CD4-positive, alpha-beta memory T cell (primary cell): ENCODE measurements at regions of chrX and their contacts with region 1.

Region 1: GRCh38 chrX:46912098-46912602 is at the start of gene JADE3:
- DNase-seq: peak in 4 of 5 donors; percentile 8 to 40 (median 13)
- H3K4me3 ChIP-seq: peak within 1 kb of the TSS in 1 of 2 donors; percentile 38
- H3K4me3 Mint-ChIP-seq: peak within 1 kb of the TSS; percentile 71 to 86 (median 82)
- H3K27ac ChIP-seq: no peak within 1 kb of the TSS
- H3K27ac Mint-ChIP-seq: peak within 1 kb of the TSS in 1 of 7 donors; percentile 36
- H3K4me1 ChIP-seq: peaks cover 10% of the 10 kb centered on the region
- H3K4me1 Mint-ChIP-seq: peaks cover 4 to 6% (median 6%) of the 10 kb centered on the region in 4 donors
- H3K27me3 ChIP-seq: peaks cover 8% of the 10 kb centered on the region
- H3K27me3 Mint-ChIP-seq: peaks cover 9 to 10% of the 10 kb centered on the region in 2 donors
- total RNA-seq, gene JADE3: 0.44 to 0.58 TPM

Region 2: DNA sequence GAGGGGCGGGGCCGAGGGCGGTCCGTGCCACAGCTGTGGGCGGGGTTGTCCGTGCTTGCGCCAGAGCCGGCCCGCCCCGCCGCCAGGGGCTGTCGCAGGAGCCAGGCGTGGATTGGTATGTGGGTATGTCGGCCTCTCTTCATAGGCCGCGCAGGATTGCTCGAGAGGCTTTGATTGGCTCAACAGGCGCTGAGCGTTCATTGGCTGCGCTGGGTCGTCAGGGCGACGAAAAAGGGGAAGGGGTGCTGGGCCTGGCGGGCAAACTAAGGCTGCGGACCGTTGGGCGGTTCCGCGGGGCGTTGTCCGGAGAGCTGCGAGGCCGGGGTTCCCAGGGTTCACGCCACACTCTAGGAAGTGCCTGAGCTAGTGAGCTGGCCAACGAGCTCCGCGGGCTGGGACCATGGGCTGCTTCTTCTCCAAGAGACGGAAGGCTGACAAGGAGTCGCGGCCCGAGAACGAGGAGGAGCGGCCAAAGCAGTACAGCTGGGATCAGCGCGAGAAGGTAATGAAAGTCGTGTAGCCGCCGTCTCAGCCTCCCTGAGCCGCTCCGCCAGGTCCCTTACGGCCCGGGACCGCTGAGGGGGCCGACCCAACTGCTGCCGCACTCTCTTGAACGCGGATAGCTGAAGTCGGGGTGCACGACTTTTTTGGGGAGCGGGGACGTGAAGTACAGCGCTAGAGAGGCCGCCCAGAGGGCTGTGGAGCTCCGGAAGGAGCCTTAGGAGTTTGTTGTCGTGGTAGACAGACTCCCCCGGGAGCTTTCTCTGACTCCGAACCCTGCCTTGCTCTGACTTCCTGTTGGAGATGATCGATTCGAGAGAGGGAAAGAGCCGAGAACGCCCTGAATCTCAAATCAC is 75.2 kb before region 1 on chrX and contains the start of gene RP2:
- CTCF ChIA-PET with region 1: no interaction called
- POLR2A ChIA-PET with region 1: interaction called, 3 read pairs
- intact Hi-C with region 1: loop called (anchors 5 kb)
- DNase-seq: peak; percentile 79 to 88 (median 83)
- H3K4me3 ChIP-seq: peak within 1 kb of the TSS; percentile 42 to 91
- H3K4me3 Mint-ChIP-seq: peak within 1 kb of the TSS; percentile 94 to 99 (median 96)
- H3K27ac ChIP-seq: peak within 1 kb of the TSS; percentile 86
- H3K27ac Mint-ChIP-seq: peak within 1 kb of the TSS; percentile 90 to 96 (median 96)
- H3K4me1 ChIP-seq: peaks cover 33% of the 10 kb centered on the region
- H3K4me1 Mint-ChIP-seq: peaks cover 2 to 45% (median 10%) of the 10 kb centered on the region in 4 donors
- H3K27me3 ChIP-seq: no peaks in the 10 kb centered on the region
- H3K27me3 Mint-ChIP-seq: no peaks in the 10 kb centered on the region
- total RNA-seq, gene RP2: 7.1 to 7.5 TPM